ENCODE measurements at regions of chr2 and their contacts with region 1.

Region 1: GRCh38 chr2:170815746-170816503 is 762 bp upstream of the GAD1 start:
- DNase-seq: no peak
- ATAC-seq: peak in 1 of 2 donors; percentile 32
- H3K4me3 ChIP-seq: peak overlapping the region; percentile 42 to 62 (median 48)
- H3K27ac ChIP-seq: no peak overlapping the region
- H3K4me1 ChIP-seq: peaks cover 54 to 62% of the 10 kb centered on the region in 2 donors
- H3K27me3 ChIP-seq: peaks cover 81 to 82% (median 81%) of the 10 kb centered on the region in 3 donors
- CTCF ChIP-seq: peak; percentile 55 to 82 (median 76)
- POLR2A ChIP-seq: no peak

Region 2: GRCh38 chr2:170324640-170325046 is 491.3 kb before region 1 on chr2:
- in situ Hi-C with region 1: no loop called
- intact Hi-C with region 1: loop called (anchors 1 kb)
- DNase-seq: no peak
- ATAC-seq: no peak
- H3K4me3 ChIP-seq: no peak overlapping the region
- H3K27ac ChIP-seq: no peak overlapping the region
- H3K4me1 ChIP-seq: no peaks in the 10 kb centered on the region
- H3K27me3 ChIP-seq: peaks cover 0 to 3% (median 0%) of the 10 kb centered on the region in 3 donors
- CTCF ChIP-seq: peak in 3 of 5 experiments; percentile 28 to 43 (median 32)
- POLR2A ChIP-seq: no peak

Region 3: GRCh38 chr2:170369894-170370293 is 446.0 kb before region 1 on chr2:
- in situ Hi-C with region 1: loop called in 2 of 4 experiments (anchors 10 kb)
- intact Hi-C with region 1: no loop called
- DNase-seq: no peak
- ATAC-seq: no peak
- H3K4me3 ChIP-seq: no peak overlapping the region
- H3K27ac ChIP-seq: no peak overlapping the region
- H3K4me1 ChIP-seq: no peaks in the 10 kb centered on the region
- H3K27me3 ChIP-seq: peaks cover 0 to 23% (median 7%) of the 10 kb centered on the region in 3 donors
- CTCF ChIP-seq: peak in 3 of 5 experiments; percentile 12 to 14 (median 13)
- POLR2A ChIP-seq: no peak

Region 4: GRCh38 chr2:170486730-170487129 is 329.2 kb before region 1 on chr2:
- in situ Hi-C with region 1: loop called in 2 of 4 experiments (anchors 5 to 25 kb)
- intact Hi-C with region 1: loop called (anchors 2 kb)
- DNase-seq: no peak
- ATAC-seq: peak in 1 of 2 donors; percentile 80
- H3K4me3 ChIP-seq: no peak overlapping the region
- H3K27ac ChIP-seq: no peak overlapping the region
- H3K4me1 ChIP-seq: no peaks in the 10 kb centered on the region
- H3K27me3 ChIP-seq: no peaks in the 10 kb centered on the region
- CTCF ChIP-seq: peak in 3 of 5 experiments; percentile 11 to 33 (median 32)
- POLR2A ChIP-seq: no peak

Region 5: DNA sequence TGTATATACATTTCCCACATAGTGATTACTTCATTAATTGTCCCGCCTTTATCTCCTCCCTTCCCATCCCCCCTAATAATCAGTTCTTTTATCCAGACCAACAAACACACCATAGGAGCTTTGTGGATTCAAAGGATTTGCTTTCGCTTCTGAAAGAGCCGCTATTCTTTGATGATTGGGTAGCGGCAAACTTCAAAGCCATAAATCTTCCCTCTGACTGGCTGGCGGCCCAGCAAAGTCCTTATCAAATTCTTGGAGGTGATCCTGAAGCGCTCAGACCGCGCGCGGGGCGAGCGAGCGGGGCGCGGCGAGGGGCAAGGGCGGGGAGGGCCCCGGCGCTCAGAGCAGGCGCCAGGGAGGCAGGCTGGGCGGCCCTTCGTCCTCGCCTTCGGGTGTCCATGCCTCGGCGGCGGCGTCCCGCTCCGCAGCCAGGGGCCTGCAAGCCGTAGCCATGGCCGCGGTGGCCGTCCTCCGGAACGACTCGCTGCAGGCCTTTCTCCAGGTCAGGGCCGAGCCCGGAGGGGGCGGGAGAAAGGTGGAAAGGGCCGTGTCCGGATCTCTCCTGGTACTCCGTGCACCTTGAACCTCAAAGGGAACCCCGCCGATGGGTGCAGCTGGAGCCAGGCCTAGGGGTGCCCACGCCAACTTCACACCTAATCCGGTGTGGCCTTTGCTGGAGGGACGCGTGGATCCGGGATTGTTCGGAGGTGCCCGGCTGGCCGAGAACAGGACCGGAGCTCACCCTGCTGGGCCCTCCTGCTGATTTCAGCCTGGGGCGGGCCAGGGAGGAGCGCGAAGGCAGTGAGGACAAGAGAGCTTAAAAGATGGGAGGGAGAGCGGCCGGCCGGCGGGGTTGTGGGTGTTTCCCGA is 100.6 kb before region 1 on chr2 and contains the start of gene SP5:
- in situ Hi-C with region 1: no loop called
- intact Hi-C with region 1: loop called (anchors 10 kb)
- DNase-seq: no peak
- ATAC-seq: peak in 1 of 2 donors; percentile 14
- H3K4me3 ChIP-seq: peak within 1 kb of the TSS; percentile 44 to 63 (median 58)
- H3K27ac ChIP-seq: no peak within 1 kb of the TSS
- H3K4me1 ChIP-seq: peaks cover 4 to 16% of the 10 kb centered on the region in 2 donors
- H3K27me3 ChIP-seq: peaks cover 82 to 94% (median 86%) of the 10 kb centered on the region in 3 donors
- CTCF ChIP-seq: no peak
- POLR2A ChIP-seq: no peak
- total RNA-seq, gene SP5: 0.29 to 0.44 (median 0.39) TPM in 3 of 4 donors, not detected in the other

Region 6: DNA sequence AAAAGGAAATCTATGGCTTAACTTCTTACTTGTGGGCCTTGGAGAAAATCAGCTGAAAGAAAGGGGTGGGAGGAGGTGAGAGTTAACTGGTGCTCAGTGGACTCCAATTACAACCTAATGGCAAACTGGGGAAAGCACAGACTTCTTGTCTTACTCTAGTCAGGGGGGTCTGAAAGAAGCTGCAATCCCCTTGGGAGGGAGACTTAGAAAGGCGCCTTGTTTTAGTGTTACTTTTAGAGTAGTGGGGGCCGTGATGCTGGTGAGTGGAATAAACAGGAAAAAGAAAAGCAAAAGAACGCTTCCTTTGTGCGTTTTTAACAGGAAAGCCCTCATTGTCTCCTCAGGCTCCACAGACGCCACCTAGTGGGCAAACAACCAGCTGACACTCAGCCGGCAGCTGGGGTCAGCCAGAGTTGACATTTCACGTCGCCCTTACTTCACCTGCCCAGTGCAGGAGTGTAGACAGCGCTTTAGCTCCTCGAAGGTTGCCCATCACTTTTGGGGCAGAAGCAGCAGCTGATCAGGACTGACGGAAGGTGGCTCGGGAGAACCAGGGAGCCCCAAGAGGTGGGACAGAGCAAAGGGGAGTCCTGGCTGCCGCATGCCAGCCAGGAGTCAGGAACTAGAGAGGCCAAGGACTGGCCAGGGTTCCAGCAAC is 57.2 kb after region 1 on chr2:
- in situ Hi-C with region 1: no loop called
- intact Hi-C with region 1: no loop called
- DNase-seq: peak; percentile 6 to 47
- ATAC-seq: peak; percentile 39 to 91
- H3K4me3 ChIP-seq: peak overlapping the region in 3 of 4 donors; percentile 14 to 42 (median 21)
- H3K27ac ChIP-seq: no peak overlapping the region
- H3K4me1 ChIP-seq: no peaks in the 10 kb centered on the region
- H3K27me3 ChIP-seq: no peaks in the 10 kb centered on the region
- CTCF ChIP-seq: peak; percentile 23 to 84 (median 65)
- POLR2A ChIP-seq: no peak

Region 7: GRCh38 chr2:170966648-170967436 is 150.9 kb after region 1 on chr2:
- in situ Hi-C with region 1: no loop called
- intact Hi-C with region 1: no loop called
- DNase-seq: no peak
- ATAC-seq: no peak
- H3K4me3 ChIP-seq: no peak overlapping the region
- H3K27ac ChIP-seq: no peak overlapping the region
- H3K4me1 ChIP-seq: no peaks in the 10 kb centered on the region
- H3K27me3 ChIP-seq: no peaks in the 10 kb centered on the region
- CTCF ChIP-seq: no peak
- POLR2A ChIP-seq: no peak

Region 8: DNA sequence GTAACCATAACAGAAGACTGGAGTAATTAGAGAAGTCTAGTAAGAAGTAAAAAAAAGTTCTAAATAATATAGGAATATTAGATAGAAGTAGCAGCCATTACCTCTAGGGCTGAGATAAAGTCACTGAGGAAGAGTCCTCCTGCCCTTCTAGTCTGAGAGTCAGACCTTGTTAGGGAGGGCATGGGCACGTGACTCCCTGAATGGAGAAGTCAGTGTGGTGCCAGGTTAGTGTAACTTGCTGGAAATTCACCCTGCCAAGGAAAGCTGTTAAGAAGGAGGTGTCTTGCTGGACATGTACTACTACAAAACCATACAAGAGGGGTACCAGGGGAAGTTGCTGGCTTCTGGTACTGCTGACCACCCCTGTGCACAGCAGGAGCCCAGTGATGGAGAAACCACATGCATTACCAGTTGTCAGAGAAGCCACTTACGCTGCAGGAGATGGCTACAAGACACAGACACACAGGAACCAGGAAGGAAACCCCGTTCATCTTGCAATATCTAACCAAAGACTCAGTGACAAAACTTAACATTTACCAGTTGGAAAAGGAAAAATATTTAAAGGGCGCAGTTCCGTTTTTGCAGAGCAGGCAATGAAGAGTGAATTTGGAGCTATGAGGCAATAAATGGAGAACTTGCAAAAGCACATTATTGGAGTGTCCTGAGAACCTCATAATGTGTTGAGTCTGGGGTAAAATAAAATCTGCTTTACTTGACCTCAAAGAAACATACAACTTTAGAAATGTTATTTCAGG is 422.0 kb after region 1 on chr2:
- in situ Hi-C with region 1: no loop called
- intact Hi-C with region 1: no loop called
- DNase-seq: no peak
- ATAC-seq: no peak
- H3K4me3 ChIP-seq: no peak overlapping the region
- H3K27ac ChIP-seq: no peak overlapping the region
- H3K4me1 ChIP-seq: no peaks in the 10 kb centered on the region
- H3K27me3 ChIP-seq: no peaks in the 10 kb centered on the region
- CTCF ChIP-seq: no peak
- POLR2A ChIP-seq: no peak

Measured in gastrocnemius medialis (tissue), 4 donors.